GM10248 (cell line): ENCODE measurements at regions of chr2 and their contacts with region 1.

Region 1: GRCh38 chr2:8872821-8873432 is 35.5 kb upstream of the KIDINS220 start:
- DNase-seq: peak; percentile 46
- CTCF ChIP-seq: peak; percentile 37

Region 2: GRCh38 chr2:8836971-8837794 is 35.7 kb before region 1 on chr2 and contains the start of gene KIDINS220:
- CTCF ChIA-PET with region 1: no interaction called
- POLR2A ChIA-PET with region 1: no interaction called
- DNase-seq: peak; percentile 99
- CTCF ChIP-seq: no peak

Region 3: GRCh38 chr2:8862230-8862629 is 10.7 kb before region 1 on chr2:
- CTCF ChIA-PET with region 1: interaction called, 23 read pairs
- POLR2A ChIA-PET with region 1: no interaction called
- DNase-seq: no peak
- CTCF ChIP-seq: no peak